Heart left ventricle (tissue), 16 donors: ENCODE measurements at regions of chr1 and their contacts with region 1.

Region 1: DNA sequence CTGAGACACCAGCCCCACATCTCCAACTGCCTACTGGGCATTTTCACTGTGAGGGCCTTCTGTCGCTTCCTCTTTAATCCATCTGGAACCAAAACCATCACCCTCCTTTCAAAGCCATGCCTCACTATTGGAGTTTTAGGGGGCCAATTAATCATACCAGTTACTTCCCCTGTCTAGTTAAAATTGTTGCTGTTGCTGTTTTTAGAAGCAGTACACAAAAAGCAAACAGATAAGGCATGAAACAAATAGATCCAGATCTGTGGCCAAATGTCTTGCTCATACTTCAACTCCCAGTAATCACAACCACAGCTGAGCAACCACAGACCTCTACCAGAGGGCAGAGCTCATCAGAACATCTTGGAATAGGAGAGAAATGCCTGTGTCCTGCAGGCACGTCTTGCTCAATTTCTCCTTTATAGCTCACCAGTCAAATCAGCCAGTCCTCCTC is 133.8 kb upstream of the C1orf105 start:
- DNase-seq: peak in 1 of 5 donors; percentile 41
- ATAC-seq: peak; percentile 59 to 92 (median 76)
- H3K4me3 ChIP-seq: no peak overlapping the region
- H3K27ac ChIP-seq: peak overlapping the region in 9 of 12 donors; percentile 3 to 77 (median 35)
- H3K4me1 ChIP-seq: peaks cover 0 to 23% (median 12%) of the 10 kb centered on the region in 12 donors
- H3K27me3 ChIP-seq: no peaks in the 10 kb centered on the region
- CTCF ChIP-seq: no peak
- POLR2A ChIP-seq: no peak

Region 2: DNA sequence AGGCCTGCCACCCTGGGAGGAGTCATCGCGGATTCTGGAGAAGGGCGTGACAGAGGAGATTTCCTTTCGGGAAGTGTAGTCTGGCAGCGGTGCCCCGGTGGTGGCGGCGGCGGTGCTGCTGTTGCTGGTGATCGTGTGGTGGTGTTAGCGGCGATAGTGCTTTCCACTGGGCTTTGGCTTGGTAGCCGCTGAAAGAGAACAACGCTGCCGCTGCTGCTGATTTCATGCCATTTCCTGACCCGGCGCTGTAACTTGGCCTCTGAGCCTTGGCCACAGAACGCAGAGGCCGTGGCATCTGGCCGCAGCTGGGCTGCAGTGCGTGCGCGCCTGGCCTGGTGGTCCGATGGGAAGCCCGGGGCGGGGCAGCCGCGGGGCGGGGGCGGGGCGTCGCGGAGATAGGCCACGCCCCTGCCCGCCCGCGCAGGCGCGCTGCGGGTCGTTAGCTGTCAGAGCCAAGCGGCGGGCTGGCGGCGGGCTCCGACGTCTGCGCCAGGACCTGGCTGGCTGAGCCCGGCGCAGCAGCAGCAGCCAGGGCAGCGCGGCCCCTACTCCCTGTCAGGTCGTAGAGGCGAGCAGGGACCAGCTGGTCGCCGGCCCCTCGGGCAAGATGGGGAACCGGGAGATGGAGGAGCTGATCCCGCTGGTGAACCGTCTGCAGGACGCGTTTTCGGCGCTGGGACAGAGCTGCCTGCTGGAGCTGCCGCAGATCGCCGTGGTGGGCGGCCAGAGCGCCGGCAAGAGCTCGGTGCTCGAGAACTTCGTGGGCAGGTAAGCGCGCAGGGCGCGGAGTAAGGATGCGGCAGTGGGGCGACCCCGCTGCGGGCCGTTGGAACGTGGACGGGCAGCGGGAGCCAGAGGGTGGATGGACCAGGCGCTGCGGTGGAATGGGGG is 445.4 kb before region 1 on chr1 and contains the start of gene DNM3:
- intact Hi-C with region 1: no loop called
- DNase-seq: peak; percentile 82 to 93 (median 87)
- ATAC-seq: peak; percentile 77 to 99 (median 98)
- H3K4me3 ChIP-seq: peak within 1 kb of the TSS; percentile 58 to 91 (median 80)
- H3K27ac ChIP-seq: peak within 1 kb of the TSS in 11 of 12 donors; percentile 24 to 79 (median 64)
- H3K4me1 ChIP-seq: peaks cover 0 to 24% (median 7%) of the 10 kb centered on the region in 12 donors
- H3K27me3 ChIP-seq: peaks cover 0 to 7% (median 0%) of the 10 kb centered on the region in 9 donors
- CTCF ChIP-seq: no peak
- POLR2A ChIP-seq: peak in 1 of 2 donors; percentile 74
- total RNA-seq, gene DNM3: 1.1 to 3.9 (median 2.2) TPM

Region 3: DNA sequence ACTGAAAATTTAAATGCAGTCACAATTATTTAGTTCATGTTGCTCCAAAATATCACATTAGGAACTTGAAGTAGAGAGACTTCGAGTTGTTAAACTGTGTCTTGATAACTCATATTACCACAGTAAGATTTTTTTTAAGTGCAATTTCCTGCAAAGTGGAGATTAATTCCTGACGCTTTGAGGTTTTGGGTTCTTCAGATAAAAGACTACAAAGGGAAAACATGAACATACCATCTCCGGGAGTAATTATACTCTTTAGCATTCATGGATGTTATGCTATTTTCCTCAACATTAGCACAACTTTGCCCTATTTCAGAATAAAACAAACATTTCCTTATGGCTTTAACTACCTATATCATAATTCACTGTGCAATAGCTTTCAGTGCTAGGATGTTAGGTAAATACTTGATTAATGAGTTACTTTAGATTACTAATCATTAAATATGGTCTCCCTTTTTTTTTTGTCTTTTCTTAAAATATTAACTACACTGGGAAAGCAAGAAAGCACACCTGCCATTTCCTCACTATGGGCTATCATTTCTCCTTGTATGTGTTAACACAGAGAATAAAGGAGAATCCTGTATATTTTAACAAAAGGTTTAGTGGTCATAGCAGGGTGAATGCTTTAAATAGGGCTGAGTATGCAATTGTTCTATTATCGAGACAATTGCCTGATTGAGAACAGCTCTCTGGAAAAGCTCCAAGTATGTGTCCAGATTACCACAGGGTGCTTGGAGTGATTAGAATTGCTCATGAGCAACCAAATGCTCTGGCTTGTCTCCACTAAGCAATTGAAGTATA is 118.7 kb before region 1 on chr1:
- intact Hi-C with region 1: loop called in 1 of 10 experiments (anchors 10 kb)
- DNase-seq: no peak
- ATAC-seq: peak; percentile 71 to 95 (median 87)
- H3K4me3 ChIP-seq: no peak overlapping the region
- H3K27ac ChIP-seq: peak overlapping the region in 8 of 12 donors; percentile 5 to 65 (median 46)
- H3K4me1 ChIP-seq: peaks cover 0 to 19% (median 2%) of the 10 kb centered on the region in 12 donors
- H3K27me3 ChIP-seq: no peaks in the 10 kb centered on the region
- CTCF ChIP-seq: no peak
- POLR2A ChIP-seq: no peak

Region 4: DNA sequence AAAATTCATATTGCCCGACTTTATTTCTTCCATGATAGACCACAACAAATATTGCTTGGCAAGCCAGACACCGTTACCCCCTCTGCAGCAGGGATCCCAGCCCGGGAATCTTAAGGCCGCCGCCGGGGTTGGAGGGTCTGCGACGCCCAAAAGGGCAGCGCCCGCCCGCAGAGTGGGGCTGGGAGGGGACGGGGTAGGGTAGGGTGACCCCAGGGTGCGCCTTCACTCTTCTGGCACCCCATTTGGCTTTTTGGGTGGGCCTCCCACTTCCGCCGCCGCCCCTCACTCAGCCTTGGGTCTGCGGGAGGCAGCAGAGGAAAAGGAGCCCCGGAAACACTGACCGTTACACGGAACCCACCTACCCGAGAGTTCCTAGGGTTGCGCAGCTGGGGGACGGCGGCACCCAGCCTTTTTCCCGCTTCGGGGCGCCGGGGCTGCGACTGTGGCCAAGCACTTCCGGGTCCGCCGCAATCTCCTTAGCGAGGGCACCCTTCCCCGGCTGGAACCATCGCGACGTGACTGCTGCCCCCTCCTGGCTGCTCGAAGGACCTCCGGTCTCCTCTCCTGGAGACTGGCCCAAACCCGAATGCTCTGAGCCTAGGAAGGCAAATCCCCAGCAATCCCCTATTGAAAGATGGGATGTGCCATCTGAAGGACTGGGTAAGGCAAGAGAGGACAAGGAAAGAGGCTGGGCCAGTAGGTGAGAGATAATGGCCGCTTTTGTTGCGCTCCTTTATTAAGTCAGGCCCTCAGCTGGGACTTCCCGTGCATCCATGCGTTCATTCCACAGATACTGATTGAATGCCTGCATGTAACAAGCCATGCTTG is 157.2 kb after region 1 on chr1 and contains the start of gene PIGC:
- intact Hi-C with region 1: no loop called
- DNase-seq: peak; percentile 89 to 96 (median 93)
- ATAC-seq: peak; percentile 93 to 100 (median 99)
- H3K4me3 ChIP-seq: peak within 1 kb of the TSS; percentile 49 to 100 (median 96)
- H3K27ac ChIP-seq: peak within 1 kb of the TSS; percentile 59 to 91 (median 81)
- H3K4me1 ChIP-seq: peaks cover 0 to 23% (median 12%) of the 10 kb centered on the region in 12 donors
- H3K27me3 ChIP-seq: no peaks in the 10 kb centered on the region
- CTCF ChIP-seq: peak; percentile 78 to 93 (median 86)
- POLR2A ChIP-seq: peak in 1 of 2 donors; percentile 52
- total RNA-seq, gene PIGC: 12.3 to 17.6 (median 14.1) TPM